ENCODE measurements at regions of chr19 and their contacts with region 1.

Region 1: DNA sequence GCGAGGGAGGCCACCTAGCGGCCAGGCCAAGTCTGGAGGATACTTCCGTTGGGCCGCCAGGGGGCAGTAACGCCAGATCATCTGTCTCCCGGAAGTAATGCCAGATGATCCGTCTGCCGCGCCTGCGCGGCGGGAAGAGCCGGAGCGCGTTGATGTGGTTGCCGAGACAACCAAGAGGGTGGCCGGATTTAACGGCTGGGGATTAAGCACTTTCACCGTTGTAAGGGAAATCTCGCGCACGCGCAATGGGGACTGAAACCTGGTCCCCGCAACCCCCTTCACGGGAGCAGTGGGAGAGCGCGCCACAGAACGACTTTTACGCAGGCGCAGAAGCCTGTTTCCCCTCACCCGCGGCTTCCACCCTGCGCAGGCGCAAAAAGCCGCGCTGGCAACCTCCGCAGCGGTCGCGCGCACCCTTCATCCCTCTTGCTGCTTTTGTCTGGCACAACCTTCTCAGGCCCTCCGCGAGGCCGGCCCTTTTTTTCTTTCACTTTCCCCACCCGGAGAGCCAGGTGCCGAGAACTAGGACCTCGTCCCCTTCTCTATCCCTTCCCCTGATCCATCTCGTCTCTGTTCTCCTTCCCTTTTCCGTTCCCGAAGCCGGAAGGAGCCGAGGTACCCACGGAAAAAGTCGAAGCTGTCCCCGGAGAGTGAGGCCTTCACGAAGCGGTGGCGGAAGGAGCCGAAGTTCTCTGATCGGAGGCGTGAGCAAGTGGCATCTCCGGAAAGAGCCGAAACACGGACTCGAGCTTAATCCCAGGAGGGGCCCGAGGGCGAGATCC is 886 bp upstream of the U2AF2 start:
- DNase-seq: peak; percentile 99 to 100
- H3K4me3 ChIP-seq: peak overlapping the region; percentile 72
- H3K27ac ChIP-seq: peak overlapping the region; percentile 95
- H3K4me1 ChIP-seq: peaks cover 25% of the 10 kb centered on the region
- H3K27me3 ChIP-seq: no peaks in the 10 kb centered on the region
- CTCF ChIP-seq: peak; percentile 97

Region 2: DNA sequence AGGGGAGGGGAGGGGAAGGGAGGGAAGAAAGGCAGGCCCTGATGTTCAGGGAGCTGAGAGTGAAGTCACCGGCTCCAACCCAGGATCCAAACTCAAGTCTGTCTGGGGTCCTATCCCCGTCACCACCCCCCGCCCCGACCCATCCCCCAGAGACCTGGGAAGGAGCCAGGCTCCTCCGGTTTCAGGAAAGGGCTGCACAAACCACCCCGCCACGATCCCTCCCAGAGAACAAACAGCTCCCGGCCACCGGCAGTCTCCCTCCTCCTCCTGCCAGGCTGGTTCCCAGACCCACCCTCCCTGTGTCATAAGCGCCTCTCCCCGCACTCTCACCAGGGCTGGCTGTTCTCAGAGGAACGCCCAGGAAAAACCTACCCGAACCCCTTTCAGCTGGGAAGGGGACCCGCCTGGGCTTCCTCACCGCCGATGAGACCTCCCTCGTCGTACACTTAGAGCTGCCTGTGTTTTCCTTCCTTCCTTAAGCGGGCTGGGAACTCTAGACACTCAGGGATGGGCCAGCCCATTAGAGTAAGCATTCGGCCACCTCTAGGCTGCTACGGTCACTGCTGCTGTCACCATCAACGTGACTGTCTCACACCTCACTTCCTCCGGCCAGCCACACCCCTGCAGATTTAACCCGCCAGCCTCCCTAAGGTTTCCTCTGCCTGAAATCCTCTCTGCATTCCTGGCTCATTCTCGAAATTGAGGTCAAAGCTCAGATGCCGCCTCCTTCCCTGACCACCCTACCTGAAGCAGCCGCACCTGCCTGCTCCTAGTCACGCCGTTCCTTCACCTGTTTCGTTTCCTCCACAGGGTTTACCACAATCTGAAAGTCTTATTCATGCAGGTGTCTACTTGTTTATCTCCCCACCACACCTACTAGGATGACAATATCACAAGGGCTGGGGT is 584.7 kb before region 1 on chr19:
- CTCF ChIA-PET with region 1: interaction called, 11 read pairs
- POLR2A ChIA-PET with region 1: no interaction called
- intact Hi-C with region 1: no loop called
- DNase-seq: peak; percentile 90 to 98
- H3K4me3 ChIP-seq: peak overlapping the region; percentile 63
- H3K27ac ChIP-seq: peak overlapping the region; percentile 98
- H3K4me1 ChIP-seq: peaks cover 31% of the 10 kb centered on the region
- H3K27me3 ChIP-seq: no peaks in the 10 kb centered on the region
- CTCF ChIP-seq: no peak; the same call in 1 of the 2 replicates

Region 3: GRCh38 chr19:55088543-55089341 is 565.2 kb before region 1 on chr19:
- CTCF ChIA-PET with region 1: no interaction called
- POLR2A ChIA-PET with region 1: interaction called, 13 read pairs
- intact Hi-C with region 1: no loop called
- DNase-seq: peak; percentile 35 to 86
- H3K4me3 ChIP-seq: no peak overlapping the region
- H3K27ac ChIP-seq: peak overlapping the region; percentile 18; the same call in 1 of the 2 replicates
- H3K4me1 ChIP-seq: no peaks in the 10 kb centered on the region
- H3K27me3 ChIP-seq: no peaks in the 10 kb centered on the region
- CTCF ChIP-seq: peak; percentile 86

Region 4: DNA sequence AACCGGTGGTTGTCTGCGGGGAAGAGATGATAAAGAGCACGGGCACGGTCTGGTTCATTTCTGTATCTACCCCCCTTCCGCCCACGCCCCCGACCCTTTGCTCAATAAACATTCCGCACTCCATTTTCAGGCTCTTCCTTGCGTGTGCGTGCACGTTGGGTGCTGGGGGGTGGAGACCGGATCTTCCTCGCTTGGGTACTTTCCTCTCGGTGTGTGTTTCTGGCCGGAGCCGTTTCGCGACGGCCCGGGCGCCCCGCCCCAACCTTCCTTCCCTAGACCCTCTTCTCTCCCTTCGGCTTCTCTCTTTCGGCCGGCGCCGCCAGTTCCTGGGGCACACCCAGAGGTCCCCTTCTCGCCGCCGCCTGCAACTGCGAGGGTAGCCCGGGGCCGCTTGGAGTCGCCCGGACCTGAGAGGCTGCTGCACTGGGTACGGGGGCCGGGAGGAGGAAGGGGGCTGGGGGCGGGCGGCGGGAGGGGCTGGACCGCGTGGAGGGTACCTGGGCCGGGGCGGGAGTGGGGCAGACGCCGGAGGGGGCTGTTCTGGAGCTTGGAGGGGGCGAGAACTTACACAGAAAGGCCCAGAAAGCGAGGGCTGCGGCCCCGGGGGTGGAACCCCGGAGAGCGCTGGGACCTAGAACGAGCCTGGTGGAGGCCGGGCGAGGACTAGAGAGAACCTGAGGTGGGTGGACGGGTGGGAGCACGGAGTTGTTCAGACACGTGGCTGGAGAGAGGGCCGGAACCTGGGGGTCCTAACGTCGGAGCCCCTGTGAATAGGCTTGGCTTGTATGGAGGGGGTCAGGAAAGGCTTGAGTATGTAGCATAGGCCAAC is 10.4 kb before region 1 on chr19 and contains the start of gene ZNF581:
- CTCF ChIA-PET with region 1: no interaction called
- POLR2A ChIA-PET with region 1: interaction called, 8 read pairs
- intact Hi-C with region 1: loop called (anchors 1 kb)
- DNase-seq: peak; percentile 66 to 79
- H3K4me3 ChIP-seq: peak within 1 kb of the TSS; percentile 66
- H3K27ac ChIP-seq: peak within 1 kb of the TSS; percentile 44
- H3K4me1 ChIP-seq: peaks cover 8% of the 10 kb centered on the region
- H3K27me3 ChIP-seq: no peaks in the 10 kb centered on the region
- CTCF ChIP-seq: no peak
- total RNA-seq, gene ZNF581: 53.5 and 81.9 TPM in 2 replicates

Region 5: GRCh38 chr19:55667958-55668357 is 14.0 kb after region 1 on chr19:
- CTCF ChIA-PET with region 1: interaction called, 8 read pairs
- POLR2A ChIA-PET with region 1: interaction called, 13 read pairs
- intact Hi-C with region 1: no loop called
- DNase-seq: peak; percentile 83 to 85
- H3K4me3 ChIP-seq: no peak overlapping the region
- H3K27ac ChIP-seq: no peak overlapping the region
- H3K4me1 ChIP-seq: peaks cover 56% of the 10 kb centered on the region
- H3K27me3 ChIP-seq: no peaks in the 10 kb centered on the region
- CTCF ChIP-seq: no peak

Region 6: GRCh38 chr19:55857149-55857548 is 203.2 kb after region 1 on chr19:
- CTCF ChIA-PET with region 1: no interaction called
- POLR2A ChIA-PET with region 1: no interaction called
- intact Hi-C with region 1: no loop called
- DNase-seq: peak in 1 of 2 experiments; percentile 32
- H3K4me3 ChIP-seq: no peak overlapping the region
- H3K27ac ChIP-seq: no peak overlapping the region
- H3K4me1 ChIP-seq: no peaks in the 10 kb centered on the region
- H3K27me3 ChIP-seq: peaks cover 93% of the 10 kb centered on the region
- CTCF ChIP-seq: no peak

Region 7: DNA sequence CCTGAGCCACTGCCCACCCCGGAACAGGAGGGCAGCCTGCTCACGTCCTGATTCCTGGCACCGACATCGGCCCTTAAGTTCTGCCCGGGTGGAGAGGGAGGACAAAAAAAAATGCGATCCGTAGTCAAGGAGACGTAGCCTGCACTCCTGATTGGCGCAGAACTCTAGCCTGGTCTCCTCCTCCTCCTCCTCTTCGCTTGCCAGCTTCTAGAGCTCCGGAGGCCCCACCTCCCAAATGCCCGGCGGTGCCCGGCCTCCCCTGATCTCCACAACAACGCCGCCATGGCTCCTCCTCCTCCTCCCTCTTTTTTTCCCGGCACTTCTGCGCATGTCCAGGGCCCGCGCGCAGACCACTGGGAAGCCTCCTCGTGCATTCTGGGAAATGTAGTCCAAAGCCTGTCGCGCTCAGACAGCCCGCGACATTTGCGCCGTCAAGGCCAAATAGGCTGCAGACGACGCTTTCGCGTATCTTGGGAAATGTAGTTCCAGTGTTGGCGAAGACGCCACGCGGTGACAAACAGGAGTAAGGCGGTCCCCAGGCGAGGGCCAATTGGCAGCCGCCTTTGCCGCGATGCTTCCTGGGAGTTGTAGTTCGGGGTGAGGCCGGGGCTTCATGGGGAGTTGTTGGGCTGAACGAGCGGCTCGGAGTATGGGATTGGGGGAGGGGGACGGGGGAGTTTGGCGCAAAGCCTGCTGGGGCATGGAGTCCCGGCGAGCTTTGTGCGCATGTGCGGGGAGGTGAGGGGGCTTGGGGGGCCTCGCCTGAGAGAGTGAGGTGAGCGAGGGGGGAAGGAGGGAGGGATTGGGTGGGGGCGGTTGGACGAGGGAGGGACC is 486.9 kb after region 1 on chr19 and contains the start of gene ZNF444:
- CTCF ChIA-PET with region 1: no interaction called
- POLR2A ChIA-PET with region 1: no interaction called
- intact Hi-C with region 1: loop called (anchors 5 kb)
- DNase-seq: peak; percentile 98 to 100
- H3K4me3 ChIP-seq: peak within 1 kb of the TSS; percentile 60
- H3K27ac ChIP-seq: peak within 1 kb of the TSS; percentile 61
- H3K4me1 ChIP-seq: peaks cover 36% of the 10 kb centered on the region
- H3K27me3 ChIP-seq: no peaks in the 10 kb centered on the region
- CTCF ChIP-seq: no peak
- total RNA-seq, gene ZNF444: 50.5 and 74.2 TPM in 2 replicates

Measured in PC-9 (cell line).